ENCODE measurements at regions of chr4 and their contacts with region 1.

Region 1: GRCh38 chr4:107915220-107915619 is 16.1 kb upstream of the CYP2U1 start:
- DNase-seq: no peak
- ATAC-seq: no peak
- H3K4me3 ChIP-seq: no peak overlapping the region
- H3K27ac ChIP-seq: no peak overlapping the region
- H3K4me1 ChIP-seq: no peaks in the 10 kb centered on the region
- H3K27me3 ChIP-seq: no peaks in the 10 kb centered on the region
- CTCF ChIP-seq: no peak
- POLR2A ChIP-seq: no peak

Region 2: GRCh38 chr4:107631560-107631959 is 283.7 kb before region 1 on chr4:
- intact Hi-C with region 1: no loop called
- DNase-seq: peak; percentile 57 to 71 (median 64)
- ATAC-seq: peak; percentile 65
- H3K4me3 ChIP-seq: no peak overlapping the region
- H3K27ac ChIP-seq: peak overlapping the region in 2 of 4 donors; percentile 7 to 31
- H3K4me1 ChIP-seq: peaks cover 38% of the 10 kb centered on the region
- H3K27me3 ChIP-seq: no peaks in the 10 kb centered on the region
- CTCF ChIP-seq: no peak
- POLR2A ChIP-seq: no peak

Region 3: DNA sequence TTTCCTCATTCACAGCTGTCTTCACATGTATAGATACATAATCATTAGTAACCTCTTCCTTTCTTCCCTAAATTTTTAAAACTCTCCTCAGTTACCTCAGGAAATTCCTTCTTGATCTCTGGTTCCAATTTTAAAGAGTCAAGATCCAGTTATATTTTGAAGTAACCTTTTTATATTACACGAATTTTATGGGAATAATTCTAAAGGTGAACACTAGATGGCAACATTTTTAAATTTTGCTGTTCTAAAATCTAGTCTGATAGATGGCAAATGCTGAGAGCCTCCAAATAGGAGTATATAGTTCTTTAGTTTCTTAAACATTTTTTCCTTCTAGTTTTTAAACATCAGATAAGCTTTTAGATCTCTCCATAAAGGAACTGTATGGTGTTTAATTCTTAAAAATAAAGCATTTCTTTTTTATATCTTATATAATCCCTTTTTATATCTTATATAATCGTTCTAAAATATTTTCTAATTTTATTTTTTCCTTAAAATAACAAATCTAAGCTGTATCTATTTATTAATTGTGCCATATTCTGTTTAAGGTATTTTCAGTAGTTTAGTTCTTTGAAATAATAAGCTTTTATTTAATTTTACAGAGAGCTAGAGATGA is 157.2 kb before region 1 on chr4:
- intact Hi-C with region 1: loop called (anchors 5 kb)
- DNase-seq: no peak
- ATAC-seq: peak; percentile 53
- H3K4me3 ChIP-seq: no peak overlapping the region
- H3K27ac ChIP-seq: no peak overlapping the region
- H3K4me1 ChIP-seq: no peaks in the 10 kb centered on the region
- H3K27me3 ChIP-seq: no peaks in the 10 kb centered on the region
- CTCF ChIP-seq: peak in 6 of 7 experiments; percentile 44 to 68 (median 58)
- POLR2A ChIP-seq: no peak

Measured in body of pancreas (tissue), 4 donors.